CD8-positive, alpha-beta T cell (primary cell): ENCODE measurements at regions of chr4 and their contacts with region 1.

Region 1: DNA sequence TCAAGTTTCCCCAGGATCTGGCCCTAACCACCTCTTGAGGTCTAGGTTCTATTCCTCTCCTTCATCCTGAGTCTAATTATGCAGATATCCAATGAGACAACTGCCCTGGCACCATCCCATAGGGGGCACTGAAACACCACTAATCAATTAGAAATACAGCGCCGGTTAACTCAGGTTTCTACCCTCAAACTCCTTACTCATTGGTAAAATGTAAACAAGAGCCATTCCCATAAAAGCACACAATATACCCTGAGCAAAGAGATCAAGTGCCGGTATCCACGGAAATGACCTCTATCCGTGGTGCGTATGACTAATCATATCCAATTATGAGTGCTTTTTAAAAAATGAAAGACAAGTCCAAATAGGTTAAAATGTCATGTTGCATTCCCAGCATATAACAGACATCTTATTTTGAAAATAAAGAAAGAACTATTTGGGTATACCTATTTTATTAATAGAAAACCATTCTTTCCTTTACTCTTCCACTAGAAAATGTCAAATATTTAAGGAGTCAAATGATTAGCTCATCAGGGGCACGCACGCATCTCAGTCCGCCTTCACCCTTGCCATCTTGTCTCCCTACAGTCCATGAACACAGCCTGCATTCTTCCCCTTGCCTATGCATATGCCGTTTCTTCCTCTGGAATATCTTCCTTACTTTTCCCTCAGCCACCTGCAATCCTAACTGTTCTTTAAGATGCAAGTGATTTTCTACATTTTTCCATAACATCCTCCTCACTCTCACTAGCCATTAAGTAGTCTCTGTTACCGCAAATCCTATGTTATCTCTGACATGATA is 141.1 kb downstream of the MAML3 start:
- DNase-seq: peak; percentile 31 to 77 (median 59)
- ATAC-seq: peak; percentile 96
- H3K4me3 ChIP-seq: no peak overlapping the region
- H3K4me3 Mint-ChIP-seq: no peak overlapping the region
- H3K27ac ChIP-seq: no peak overlapping the region
- H3K27ac Mint-ChIP-seq: no peak overlapping the region
- H3K4me1 ChIP-seq: no peaks in the 10 kb centered on the region
- H3K4me1 Mint-ChIP-seq: peaks cover 7% of the 10 kb centered on the region
- H3K27me3 ChIP-seq: no peaks in the 10 kb centered on the region
- H3K27me3 Mint-ChIP-seq: no peaks in the 10 kb centered on the region
- CTCF ChIP-seq: peak; percentile 81

Region 2: DNA sequence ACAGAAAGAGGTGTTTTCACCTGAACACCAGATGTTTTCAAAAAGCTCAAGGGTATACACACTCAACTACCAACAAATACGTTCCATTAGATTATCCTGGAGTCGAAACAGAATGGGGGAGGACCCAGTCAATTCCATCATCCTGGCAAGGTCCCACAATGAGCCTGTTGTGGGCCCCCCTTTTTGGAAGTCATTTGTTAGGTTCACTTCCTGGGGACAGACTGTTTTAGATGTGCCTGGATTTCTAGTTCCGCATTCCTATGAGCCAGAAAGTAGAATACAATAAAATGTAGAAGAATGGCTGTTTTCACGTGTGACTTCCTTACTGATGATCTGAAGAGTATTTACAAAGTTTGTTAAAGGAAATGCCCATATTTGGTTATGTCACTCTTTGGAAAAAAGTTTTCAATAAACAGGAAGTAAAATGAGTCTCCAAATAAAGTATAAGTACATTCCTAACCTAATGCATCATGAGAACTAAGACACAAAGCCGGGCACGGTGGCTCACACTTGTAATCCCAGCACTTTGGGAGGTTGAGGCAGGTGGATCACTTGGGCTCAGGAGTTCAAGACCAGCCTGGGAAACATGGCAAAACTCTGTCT is 51.4 kb before region 1 on chr4:
- CTCF ChIA-PET with region 1: no interaction called
- POLR2A ChIA-PET with region 1: no interaction called
- intact Hi-C with region 1: no loop called
- DNase-seq: no peak
- ATAC-seq: no peak
- H3K4me3 ChIP-seq: no peak overlapping the region
- H3K4me3 Mint-ChIP-seq: no peak overlapping the region
- H3K27ac ChIP-seq: no peak overlapping the region
- H3K27ac Mint-ChIP-seq: no peak overlapping the region
- H3K4me1 ChIP-seq: no peaks in the 10 kb centered on the region
- H3K4me1 Mint-ChIP-seq: peaks cover 2% of the 10 kb centered on the region
- H3K27me3 ChIP-seq: no peaks in the 10 kb centered on the region
- H3K27me3 Mint-ChIP-seq: no peaks in the 10 kb centered on the region
- CTCF ChIP-seq: no peak

Region 3: GRCh38 chr4:140095694-140096482 is 83.0 kb after region 1 on chr4:
- CTCF ChIA-PET with region 1: interaction called, 3 read pairs
- POLR2A ChIA-PET with region 1: no interaction called
- intact Hi-C with region 1: loop called in 1 of 2 experiments (anchors 10 kb)
- DNase-seq: peak in 7 of 9 experiments; percentile 8 to 89 (median 68)
- ATAC-seq: peak; percentile 74
- H3K4me3 ChIP-seq: peak overlapping the region; percentile 7 to 19
- H3K4me3 Mint-ChIP-seq: peak overlapping the region; percentile 76
- H3K27ac ChIP-seq: peak overlapping the region; percentile 51 to 65
- H3K27ac Mint-ChIP-seq: peak overlapping the region; percentile 93
- H3K4me1 ChIP-seq: peaks cover 55% of the 10 kb centered on the region
- H3K4me1 Mint-ChIP-seq: peaks cover 76% of the 10 kb centered on the region
- H3K27me3 ChIP-seq: no peaks in the 10 kb centered on the region
- H3K27me3 Mint-ChIP-seq: no peaks in the 10 kb centered on the region
- CTCF ChIP-seq: no peak

Region 4: DNA sequence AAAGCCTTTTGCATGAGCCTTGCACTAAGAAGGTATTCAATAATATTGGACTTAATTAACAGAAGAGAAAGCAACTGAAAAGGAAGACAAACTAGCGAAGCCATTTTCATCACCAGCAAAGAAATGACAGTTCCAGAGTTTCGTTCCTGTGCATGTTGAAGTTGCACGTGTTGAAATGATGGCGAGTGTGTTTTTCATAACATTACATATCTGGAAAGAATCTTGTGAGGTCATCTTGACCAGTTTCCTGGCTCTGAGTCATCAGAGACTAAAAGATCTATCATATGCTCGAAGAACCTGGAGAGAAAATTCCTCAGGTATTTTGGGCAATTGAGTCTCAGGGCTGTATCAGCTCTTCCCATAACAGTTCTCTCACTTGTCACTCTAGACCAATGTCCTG is 247.3 kb after region 1 on chr4:
- CTCF ChIA-PET with region 1: interaction called, 100 read pairs
- POLR2A ChIA-PET with region 1: no interaction called
- intact Hi-C with region 1: no loop called
- DNase-seq: no peak
- ATAC-seq: no peak
- H3K4me3 ChIP-seq: no peak overlapping the region
- H3K4me3 Mint-ChIP-seq: no peak overlapping the region
- H3K27ac ChIP-seq: no peak overlapping the region
- H3K27ac Mint-ChIP-seq: no peak overlapping the region
- H3K4me1 ChIP-seq: no peaks in the 10 kb centered on the region
- H3K4me1 Mint-ChIP-seq: no peaks in the 10 kb centered on the region
- H3K27me3 ChIP-seq: peaks cover 0 to 2% of the 10 kb centered on the region in 2 experiments
- H3K27me3 Mint-ChIP-seq: peaks cover 2% of the 10 kb centered on the region
- CTCF ChIP-seq: no peak

Region 5: GRCh38 chr4:140359562-140360427 is 346.9 kb after region 1 on chr4:
- CTCF ChIA-PET with region 1: interaction called, 8 read pairs
- POLR2A ChIA-PET with region 1: no interaction called
- intact Hi-C with region 1: loop called (anchors 1 kb)
- DNase-seq: peak; percentile 44 to 84 (median 78)
- ATAC-seq: peak; percentile 90
- H3K4me3 ChIP-seq: no peak overlapping the region
- H3K4me3 Mint-ChIP-seq: no peak overlapping the region
- H3K27ac ChIP-seq: no peak overlapping the region
- H3K27ac Mint-ChIP-seq: no peak overlapping the region
- H3K4me1 ChIP-seq: no peaks in the 10 kb centered on the region
- H3K4me1 Mint-ChIP-seq: no peaks in the 10 kb centered on the region
- H3K27me3 ChIP-seq: no peaks in the 10 kb centered on the region
- H3K27me3 Mint-ChIP-seq: no peaks in the 10 kb centered on the region
- CTCF ChIP-seq: peak; percentile 89

Region 6: GRCh38 chr4:140609548-140610425 is 596.9 kb after region 1 on chr4:
- CTCF ChIA-PET with region 1: interaction called, 3 read pairs
- POLR2A ChIA-PET with region 1: no interaction called
- intact Hi-C with region 1: loop called in 1 of 2 experiments (anchors 2 kb)
- DNase-seq: peak in 2 of 9 experiments; percentile 13 to 48
- ATAC-seq: peak; percentile 46
- H3K4me3 ChIP-seq: no peak overlapping the region
- H3K4me3 Mint-ChIP-seq: no peak overlapping the region
- H3K27ac ChIP-seq: no peak overlapping the region
- H3K27ac Mint-ChIP-seq: no peak overlapping the region
- H3K4me1 ChIP-seq: no peaks in the 10 kb centered on the region
- H3K4me1 Mint-ChIP-seq: no peaks in the 10 kb centered on the region
- H3K27me3 ChIP-seq: peaks cover 0 to 4% of the 10 kb centered on the region in 2 experiments
- H3K27me3 Mint-ChIP-seq: peaks cover 10% of the 10 kb centered on the region
- CTCF ChIP-seq: peak; percentile 45